Activated B cell treated with CpG ODN at 0.5 μM for 24 hours (primary cell): ENCODE measurements at regions of chr11 and their contacts with region 1.

Region 1: GRCh38 chr11:27183672-27184457 is 143.2 kb downstream of the BBOX1 start:
- DNase-seq: no peak
- ATAC-seq: peak; percentile 52
- H3K4me3 Mint-ChIP-seq: no peak overlapping the region
- H3K27ac Mint-ChIP-seq: no peak overlapping the region
- H3K4me1 Mint-ChIP-seq: no peaks in the 10 kb centered on the region
- H3K27me3 Mint-ChIP-seq: peaks cover 5% of the 10 kb centered on the region
- CTCF ChIP-seq: peak; percentile 40

Region 2: DNA sequence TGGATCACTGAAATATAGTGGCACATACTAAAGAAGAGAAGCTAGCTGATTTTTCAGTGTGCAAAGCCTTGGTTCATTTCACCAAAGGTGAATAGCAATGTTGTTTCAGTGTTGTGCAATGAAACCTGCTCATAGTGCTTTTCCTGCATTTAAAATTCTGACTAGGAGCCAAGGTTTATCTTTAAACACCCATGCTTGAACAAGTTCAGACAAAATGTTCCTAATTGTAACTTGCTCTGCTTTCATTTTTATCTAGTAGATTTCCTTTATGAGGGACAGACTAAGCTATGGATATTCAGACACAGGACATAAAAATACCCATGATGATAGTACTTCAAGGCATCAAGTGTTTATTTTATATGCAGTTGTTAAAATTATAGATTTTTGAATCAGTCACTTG is 95.5 kb before region 1 on chr11:
- CTCF ChIA-PET with region 1: no interaction called
- POLR2A ChIA-PET with region 1: no interaction called
- intact Hi-C with region 1: no loop called
- DNase-seq: no peak
- ATAC-seq: no peak
- H3K4me3 Mint-ChIP-seq: no peak overlapping the region
- H3K27ac Mint-ChIP-seq: no peak overlapping the region
- H3K4me1 Mint-ChIP-seq: no peaks in the 10 kb centered on the region
- H3K27me3 Mint-ChIP-seq: no peaks in the 10 kb centered on the region
- CTCF ChIP-seq: no peak

Region 3: DNA sequence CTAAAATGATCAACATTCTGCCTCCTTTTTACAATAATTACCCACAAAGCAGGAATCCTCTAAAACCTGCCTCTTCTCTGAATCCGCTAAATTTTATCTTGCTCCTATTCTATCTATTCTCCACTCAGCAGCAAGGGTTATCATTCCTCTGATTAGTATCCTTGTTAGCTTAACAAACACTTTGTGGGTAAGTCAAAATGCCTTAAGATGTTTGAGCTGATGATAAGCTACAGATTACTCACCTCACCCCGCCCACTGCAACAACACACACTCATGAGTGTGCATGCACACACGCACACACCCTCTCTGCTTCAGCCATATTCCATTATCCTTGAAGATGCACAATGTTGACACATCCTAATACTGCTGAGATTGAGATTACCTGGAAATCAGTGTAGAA is 12.5 kb before region 1 on chr11:
- CTCF ChIA-PET with region 1: no interaction called
- POLR2A ChIA-PET with region 1: no interaction called
- intact Hi-C with region 1: no loop called
- DNase-seq: no peak
- ATAC-seq: no peak
- H3K4me3 Mint-ChIP-seq: no peak overlapping the region
- H3K27ac Mint-ChIP-seq: no peak overlapping the region
- H3K4me1 Mint-ChIP-seq: no peaks in the 10 kb centered on the region
- H3K27me3 Mint-ChIP-seq: no peaks in the 10 kb centered on the region
- CTCF ChIP-seq: no peak

Region 4: DNA sequence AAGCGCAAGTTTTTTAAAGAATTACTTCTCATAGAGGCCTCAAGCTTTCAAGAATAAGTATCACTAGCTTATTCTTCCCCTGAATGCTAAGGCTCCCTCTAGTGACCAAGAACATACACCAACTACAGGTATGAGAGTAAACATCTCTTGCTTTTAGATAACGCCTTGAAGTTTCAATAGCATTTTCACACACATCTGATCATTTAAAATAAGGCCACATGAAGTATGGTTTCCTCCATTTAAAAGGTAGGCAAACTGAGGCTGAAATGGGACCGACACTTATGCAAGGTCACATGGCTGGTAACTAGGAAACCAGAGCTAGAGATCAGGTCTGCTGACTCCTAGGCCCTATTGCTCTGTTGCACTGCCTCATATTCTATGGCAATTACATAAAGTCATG is 112.6 kb after region 1 on chr11:
- CTCF ChIA-PET with region 1: interaction called, 19 read pairs
- POLR2A ChIA-PET with region 1: no interaction called
- intact Hi-C with region 1: loop called (anchors 1 kb)
- DNase-seq: no peak
- ATAC-seq: peak; percentile 54
- H3K4me3 Mint-ChIP-seq: no peak overlapping the region
- H3K27ac Mint-ChIP-seq: no peak overlapping the region
- H3K4me1 Mint-ChIP-seq: no peaks in the 10 kb centered on the region
- H3K27me3 Mint-ChIP-seq: peaks cover 3% of the 10 kb centered on the region
- CTCF ChIP-seq: no peak

Region 5: GRCh38 chr11:27497284-27497866 is 313.5 kb after region 1 on chr11:
- CTCF ChIA-PET with region 1: interaction called, 17 read pairs
- POLR2A ChIA-PET with region 1: no interaction called
- intact Hi-C with region 1: no loop called
- DNase-seq: no peak
- ATAC-seq: peak; percentile 47
- H3K4me3 Mint-ChIP-seq: no peak overlapping the region
- H3K27ac Mint-ChIP-seq: no peak overlapping the region
- H3K4me1 Mint-ChIP-seq: peaks cover 3% of the 10 kb centered on the region
- H3K27me3 Mint-ChIP-seq: no peaks in the 10 kb centered on the region
- CTCF ChIP-seq: no peak